ENCODE measurements at regions of chr1 and their contacts with region 1.

Region 1: DNA sequence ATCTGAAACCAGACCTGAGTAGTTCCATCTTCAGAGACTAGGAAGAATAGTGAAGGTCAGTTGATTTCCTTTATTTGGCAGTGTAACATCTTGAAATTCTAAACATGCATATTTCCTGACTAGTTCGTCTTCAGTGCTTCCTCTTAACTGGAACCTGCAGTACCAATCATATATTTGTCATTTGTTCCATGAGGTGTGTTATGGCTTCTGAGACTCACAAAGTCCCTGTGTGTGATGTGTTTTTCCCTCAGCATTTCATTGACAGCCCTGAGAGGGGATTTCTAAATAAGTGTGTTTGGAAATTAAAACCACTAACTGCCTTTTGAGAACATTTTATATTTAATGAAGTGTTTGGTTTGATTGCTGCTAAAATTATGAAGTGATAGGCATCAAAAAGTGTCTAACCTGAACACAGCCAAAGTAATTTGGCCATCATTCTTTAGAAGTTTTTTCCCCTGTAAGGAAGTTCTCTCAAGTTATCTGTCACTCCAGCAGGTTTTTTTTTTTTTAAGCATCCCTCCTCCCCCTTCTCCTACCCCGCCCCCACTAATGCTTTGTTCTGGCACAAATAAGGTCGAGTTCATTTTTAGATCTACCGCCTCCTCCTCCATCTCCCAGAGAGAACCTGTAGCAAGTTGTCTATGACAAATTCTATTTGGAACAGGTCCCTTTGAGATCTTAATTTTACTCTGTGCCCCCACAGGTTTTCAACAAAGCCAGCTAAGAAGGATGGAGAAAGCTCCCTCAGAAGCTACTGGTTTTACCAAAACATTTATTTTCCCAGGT is 61.4 kb downstream of the TMEM200B start:
- DNase-seq: peak; percentile 66
- ATAC-seq: peak; percentile 90
- H3K4me3 Mint-ChIP-seq: peak overlapping the region; percentile 56
- H3K27ac Mint-ChIP-seq: peak overlapping the region; percentile 99
- H3K4me1 Mint-ChIP-seq: peaks cover 59% of the 10 kb centered on the region
- H3K27me3 Mint-ChIP-seq: no peaks in the 10 kb centered on the region

Region 2: DNA sequence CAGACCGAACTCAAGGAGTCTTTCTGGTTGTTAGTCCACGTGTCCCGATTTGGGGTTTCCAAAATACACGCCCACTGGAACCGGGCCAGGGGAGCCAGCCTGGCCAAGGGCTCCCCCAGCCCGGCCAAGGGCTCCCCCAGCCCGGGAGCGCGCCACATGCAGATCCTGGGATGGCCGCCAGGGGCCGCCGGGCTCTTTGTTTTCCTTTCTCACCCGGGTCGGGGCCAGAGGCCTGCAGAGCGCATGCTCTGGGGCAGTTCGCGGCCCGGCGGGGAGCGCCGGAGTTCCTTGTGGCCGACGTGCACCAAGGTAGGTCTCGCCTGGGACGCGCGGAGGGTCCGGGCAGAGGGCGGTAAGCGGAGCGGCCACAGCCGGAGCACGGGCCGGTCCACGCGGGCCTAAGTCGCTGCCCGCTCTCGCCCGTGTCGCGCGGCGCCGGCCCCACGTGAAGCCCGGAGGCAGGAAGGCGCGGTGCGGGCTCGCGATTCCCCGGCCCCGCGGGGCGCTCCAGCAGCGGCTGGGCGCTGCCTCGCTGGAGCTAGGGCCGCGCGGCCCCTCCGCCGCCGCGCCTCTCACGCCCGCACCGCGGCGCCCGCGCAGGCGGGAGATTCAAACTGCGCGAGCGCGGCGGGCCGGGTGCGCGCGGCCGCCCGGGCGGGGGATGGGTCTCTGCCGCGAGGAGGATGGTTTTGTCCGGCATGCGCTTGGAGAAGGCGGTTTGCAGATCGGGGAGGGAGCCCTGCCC is 544.2 kb before region 1 on chr1:
- CTCF ChIA-PET with region 1: no interaction called
- POLR2A ChIA-PET with region 1: no interaction called
- intact Hi-C with region 1: loop called in 1 of 2 experiments (anchors 1 kb)
- DNase-seq: peak; percentile 95
- ATAC-seq: peak; percentile 66
- H3K4me3 Mint-ChIP-seq: peak overlapping the region; percentile 77
- H3K27ac Mint-ChIP-seq: peak overlapping the region; percentile 83
- H3K4me1 Mint-ChIP-seq: peaks cover 34% of the 10 kb centered on the region
- H3K27me3 Mint-ChIP-seq: no peaks in the 10 kb centered on the region

Region 3: DNA sequence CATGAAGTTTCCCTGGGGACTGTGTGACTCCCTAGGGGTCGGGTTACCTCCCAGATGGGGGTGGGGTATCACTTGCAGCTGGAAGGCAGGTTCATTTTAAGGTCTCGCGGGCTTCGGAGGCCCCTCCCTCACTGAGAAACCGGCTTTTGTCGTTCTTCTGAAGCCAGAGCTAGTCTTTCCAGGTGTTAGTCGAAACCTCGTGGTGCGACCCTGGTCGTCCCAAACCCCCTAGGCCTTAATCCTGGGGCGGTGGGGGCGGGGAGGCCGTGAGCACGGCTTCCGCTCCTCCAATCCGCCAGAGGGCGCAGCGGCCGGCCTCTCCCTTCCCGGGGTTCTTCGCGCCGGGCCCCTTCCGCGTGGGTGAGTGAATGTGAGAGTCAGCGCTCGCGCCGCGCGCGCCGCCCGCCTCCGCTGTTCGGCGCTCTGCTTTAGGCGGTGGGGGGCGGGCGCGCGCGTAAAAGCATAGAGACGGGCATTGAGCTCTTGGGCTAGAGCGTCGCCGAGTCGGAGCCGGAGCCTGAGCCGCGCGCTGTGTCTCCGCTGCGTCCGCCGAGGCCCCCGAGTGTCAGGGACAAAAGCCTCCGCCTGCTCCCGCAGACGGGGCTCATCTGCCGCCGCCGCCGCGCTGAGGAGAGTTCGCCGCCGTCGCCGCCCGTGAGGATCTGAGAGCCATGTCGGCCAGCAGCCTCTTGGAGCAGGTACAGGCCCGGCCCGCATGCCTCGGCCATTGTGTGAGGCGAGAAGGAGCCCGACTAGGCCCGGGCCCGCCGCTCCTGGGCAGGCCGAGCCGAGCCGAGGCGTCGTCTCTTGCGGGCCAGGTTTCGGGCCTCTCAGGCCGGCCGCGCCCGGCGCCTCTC is 325.7 kb before region 1 on chr1 and contains the start of gene YTHDF2:
- CTCF ChIA-PET with region 1: no interaction called
- POLR2A ChIA-PET with region 1: no interaction called
- intact Hi-C with region 1: no loop called
- DNase-seq: peak; percentile 99
- ATAC-seq: peak; percentile 90
- H3K4me3 Mint-ChIP-seq: peak within 1 kb of the TSS; percentile 95
- H3K27ac Mint-ChIP-seq: peak within 1 kb of the TSS; percentile 90
- H3K4me1 Mint-ChIP-seq: peaks cover 31% of the 10 kb centered on the region
- H3K27me3 Mint-ChIP-seq: no peaks in the 10 kb centered on the region
- total RNA-seq, gene YTHDF2: 74.8 to 98.7 TPM

Region 4: GRCh38 chr1:28926629-28927265 is 135.6 kb before region 1 on chr1:
- CTCF ChIA-PET with region 1: no interaction called
- POLR2A ChIA-PET with region 1: no interaction called
- intact Hi-C with region 1: loop called in 1 of 2 experiments (anchors 1 kb)
- DNase-seq: peak; percentile 24
- ATAC-seq: peak; percentile 89
- H3K4me3 Mint-ChIP-seq: peak overlapping the region; percentile 53
- H3K27ac Mint-ChIP-seq: peak overlapping the region; percentile 94
- H3K4me1 Mint-ChIP-seq: peaks cover 56% of the 10 kb centered on the region
- H3K27me3 Mint-ChIP-seq: no peaks in the 10 kb centered on the region

Region 5: DNA sequence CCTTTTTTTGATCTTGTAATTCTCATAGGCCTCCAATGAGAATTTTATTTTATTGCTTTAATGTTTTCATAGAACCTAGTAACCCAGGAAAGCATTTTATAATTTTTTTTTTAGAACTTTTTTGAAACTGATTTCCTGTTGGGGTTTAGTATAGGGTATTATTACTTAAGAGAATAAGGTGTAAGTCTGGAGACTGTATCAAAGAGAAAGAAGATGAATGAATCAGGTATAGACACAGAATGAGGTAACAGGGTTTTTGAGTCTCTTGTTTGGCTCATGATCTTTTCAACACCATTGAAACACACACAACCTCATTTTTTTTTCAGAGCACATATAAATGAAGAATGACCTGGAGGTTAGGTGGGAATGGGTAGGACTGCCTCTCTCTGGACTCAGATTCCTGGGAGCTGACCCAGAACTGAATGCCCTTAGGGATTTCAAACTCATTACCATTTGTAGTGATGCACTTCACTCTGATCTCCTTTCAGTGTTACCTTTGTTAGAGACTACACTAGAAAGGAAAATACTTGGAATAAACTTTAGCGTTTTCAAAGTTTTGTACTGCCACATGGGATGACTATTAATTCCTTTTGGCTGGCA is 97.0 kb before region 1 on chr1:
- CTCF ChIA-PET with region 1: no interaction called
- POLR2A ChIA-PET with region 1: no interaction called
- intact Hi-C with region 1: loop called in 1 of 2 experiments (anchors 2 kb)
- DNase-seq: no peak
- ATAC-seq: peak; percentile 34
- H3K4me3 Mint-ChIP-seq: no peak overlapping the region
- H3K27ac Mint-ChIP-seq: peak overlapping the region; percentile 37
- H3K4me1 Mint-ChIP-seq: peaks cover 58% of the 10 kb centered on the region
- H3K27me3 Mint-ChIP-seq: no peaks in the 10 kb centered on the region

Region 6: GRCh38 chr1:28971980-28972771 is 90.2 kb before region 1 on chr1:
- CTCF ChIA-PET with region 1: no interaction called
- POLR2A ChIA-PET with region 1: no interaction called
- intact Hi-C with region 1: loop called in 1 of 2 experiments (anchors 1 kb)
- DNase-seq: peak; percentile 46
- ATAC-seq: peak; percentile 89
- H3K4me3 Mint-ChIP-seq: peak overlapping the region; percentile 27
- H3K27ac Mint-ChIP-seq: peak overlapping the region; percentile 81
- H3K4me1 Mint-ChIP-seq: peaks cover 61% of the 10 kb centered on the region
- H3K27me3 Mint-ChIP-seq: no peaks in the 10 kb centered on the region

Region 7: DNA sequence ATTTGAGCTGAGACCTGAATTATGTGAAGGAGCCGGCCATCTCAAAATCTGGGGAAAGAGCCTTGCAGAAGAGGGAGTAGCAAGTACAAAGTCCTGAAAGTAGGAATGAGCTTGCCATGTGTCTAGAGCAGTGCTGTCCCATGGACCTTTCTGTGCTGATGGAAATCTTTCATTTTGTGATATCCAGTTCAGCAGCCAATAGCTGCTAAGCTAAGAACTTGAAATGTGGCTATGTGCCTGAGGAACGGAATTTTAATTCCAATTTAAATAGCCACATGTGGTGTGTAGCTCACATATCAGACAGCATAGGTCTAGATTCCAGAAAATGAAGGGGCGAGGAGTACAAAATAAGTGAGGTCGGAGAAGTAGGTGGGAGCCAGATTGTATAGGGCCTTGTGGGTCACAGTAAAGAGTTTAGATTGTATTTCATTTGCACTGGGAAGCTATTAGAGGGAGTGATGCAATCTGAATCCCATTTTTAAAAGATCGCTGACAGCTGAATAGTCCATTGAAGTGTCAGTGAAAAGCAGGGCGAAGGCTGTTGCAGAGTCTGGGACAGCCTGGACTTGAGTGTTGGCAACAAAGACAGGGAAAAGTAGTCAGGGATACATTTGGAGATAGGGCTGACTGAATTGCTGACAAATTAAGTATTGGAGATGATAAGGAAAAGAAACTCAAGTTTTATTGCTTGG is 18.9 kb before region 1 on chr1:
- CTCF ChIA-PET with region 1: interaction called, 7 read pairs
- POLR2A ChIA-PET with region 1: no interaction called
- intact Hi-C with region 1: loop called in 1 of 2 experiments (anchors 1 kb)
- DNase-seq: no peak
- ATAC-seq: no peak
- H3K4me3 Mint-ChIP-seq: no peak overlapping the region
- H3K27ac Mint-ChIP-seq: peak overlapping the region; percentile 70
- H3K4me1 Mint-ChIP-seq: peaks cover 40% of the 10 kb centered on the region
- H3K27me3 Mint-ChIP-seq: no peaks in the 10 kb centered on the region

Region 8: GRCh38 chr1:29124366-29125236 is 62.3 kb after region 1 on chr1:
- CTCF ChIA-PET with region 1: interaction called, 4 read pairs
- POLR2A ChIA-PET with region 1: no interaction called
- intact Hi-C with region 1: loop called in 1 of 2 experiments (anchors 5 kb)
- DNase-seq: peak; percentile 79
- ATAC-seq: peak; percentile 62
- H3K4me3 Mint-ChIP-seq: peak overlapping the region; percentile 65
- H3K27ac Mint-ChIP-seq: no peak overlapping the region
- H3K4me1 Mint-ChIP-seq: peaks cover 2% of the 10 kb centered on the region
- H3K27me3 Mint-ChIP-seq: peaks cover 12% of the 10 kb centered on the region